Esophagus muscularis mucosa (tissue), 4 donors: ENCODE measurements at regions of chr20 and their contacts with region 1.

Region 1: GRCh38 chr20:1577906-1578305 is 20.4 kb upstream of the SIRPD start:
- DNase-seq: no peak
- H3K4me3 ChIP-seq: no peak overlapping the region
- H3K27ac ChIP-seq: no peak overlapping the region
- H3K4me1 ChIP-seq: no peaks in the 10 kb centered on the region
- H3K27me3 ChIP-seq: no peaks in the 10 kb centered on the region
- CTCF ChIP-seq: no peak
- EP300 ChIP-seq: no peak
- POLR2A ChIP-seq: no peak

Region 2: GRCh38 chr20:1616858-1617434 is 39.0 kb after region 1 on chr20:
- intact Hi-C with region 1: loop called (anchors 2 kb)
- DNase-seq: no peak
- H3K4me3 ChIP-seq: no peak overlapping the region
- H3K27ac ChIP-seq: no peak overlapping the region
- H3K4me1 ChIP-seq: no peaks in the 10 kb centered on the region
- H3K27me3 ChIP-seq: no peaks in the 10 kb centered on the region
- CTCF ChIP-seq: no peak
- EP300 ChIP-seq: no peak
- POLR2A ChIP-seq: no peak